ENCODE measurements at regions of chr11 and their contacts with region 1.

Region 1: DNA sequence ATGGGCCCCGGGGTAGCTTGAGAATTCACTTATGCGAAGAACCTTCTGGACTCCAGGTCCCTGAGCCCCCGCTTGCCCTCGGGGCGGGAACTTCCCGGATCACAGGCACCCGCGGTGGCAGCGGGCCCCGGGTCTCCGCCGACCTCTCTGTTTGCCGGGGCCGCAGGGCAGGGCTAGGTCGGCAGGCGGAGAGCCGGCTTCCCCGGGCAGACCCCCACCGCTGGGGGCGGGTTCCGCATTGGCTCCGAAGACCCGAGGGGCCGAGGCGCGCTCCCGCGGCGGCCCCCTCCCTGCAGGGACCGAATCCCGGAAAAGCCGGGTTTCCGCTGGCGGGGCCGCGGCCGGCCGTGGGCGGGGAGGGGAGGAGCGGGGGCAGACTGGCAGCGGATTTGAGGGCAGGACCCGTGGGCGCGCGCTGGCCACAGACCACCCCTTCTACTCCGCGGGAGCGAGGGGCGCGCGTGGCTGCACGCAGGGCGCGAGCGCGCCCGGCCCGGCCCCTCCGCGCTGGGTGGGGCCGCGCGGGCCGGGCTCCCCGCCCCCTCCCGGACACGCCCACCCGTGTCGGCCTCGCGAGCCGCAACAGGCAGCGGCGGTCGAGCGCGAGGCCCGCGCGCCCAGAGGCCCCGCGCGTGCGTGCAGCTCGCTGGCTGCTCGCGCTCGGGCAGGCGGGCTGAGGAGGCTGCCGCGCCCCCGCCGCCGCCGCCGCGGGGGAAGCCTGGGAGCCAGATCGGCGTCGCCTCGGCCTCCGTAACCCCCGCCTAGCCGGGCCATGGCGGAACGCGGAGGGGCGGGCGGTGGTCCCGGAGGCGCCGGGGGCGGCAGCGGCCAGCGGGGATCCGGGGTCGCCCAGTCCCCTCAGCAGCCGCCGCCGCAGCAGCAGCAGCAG is at the start of gene PACS1:
- DNase-seq: peak; percentile 72 to 85 (median 79)
- H3K4me3 ChIP-seq: peak within 1 kb of the TSS; percentile 16 to 75 (median 62)
- H3K27ac ChIP-seq: peak within 1 kb of the TSS; percentile 48 to 98 (median 94)
- H3K4me1 ChIP-seq: peaks cover 18 to 39% of the 10 kb centered on the region in 2 donors
- H3K27me3 ChIP-seq: no peaks in the 10 kb centered on the region
- CTCF ChIP-seq: peak in 2 of 6 experiments; percentile 30 to 64
- POLR2A ChIP-seq: peak; percentile 65 to 70
- total RNA-seq, gene PACS1: 21.1 to 60.5 (median 50.6) TPM

Region 2: DNA sequence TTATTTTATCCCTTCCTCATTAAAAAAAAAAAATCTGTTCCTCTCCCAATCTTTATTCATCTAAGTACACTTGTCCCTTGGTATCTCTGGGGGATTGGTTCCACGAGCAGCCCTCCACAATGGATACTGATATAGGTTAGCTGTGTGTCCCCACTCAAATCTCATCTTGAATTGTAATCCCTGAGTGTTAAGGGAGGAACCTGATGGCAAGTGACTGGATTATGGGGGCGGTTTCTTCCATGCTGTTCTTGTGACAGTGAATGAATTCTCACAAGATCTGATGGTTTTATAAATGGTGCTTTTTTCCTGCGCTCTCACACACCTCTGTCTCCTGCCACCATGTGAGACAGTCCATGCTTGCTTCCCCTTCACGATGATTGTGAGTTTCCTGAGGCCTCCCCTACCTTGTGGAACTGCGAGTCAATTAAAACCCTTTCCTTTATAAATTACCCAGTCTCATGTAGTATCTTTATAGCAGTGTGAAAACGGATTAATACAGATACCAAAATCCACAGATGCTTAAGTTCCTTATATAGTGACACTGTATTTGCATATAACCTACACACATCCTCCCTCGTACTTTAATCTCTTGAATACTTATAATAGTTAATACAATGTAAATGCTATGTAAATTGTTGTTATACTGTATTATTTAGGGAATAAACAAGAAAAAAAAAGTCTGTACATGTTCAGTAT is 62.1 kb after region 1 on chr11:
- intact Hi-C with region 1: loop called in 1 of 2 experiments (anchors 2 kb)
- DNase-seq: no peak
- H3K4me3 ChIP-seq: no peak overlapping the region
- H3K27ac ChIP-seq: no peak overlapping the region
- H3K4me1 ChIP-seq: peaks cover 2 to 4% of the 10 kb centered on the region in 2 donors
- H3K27me3 ChIP-seq: no peaks in the 10 kb centered on the region
- CTCF ChIP-seq: no peak
- POLR2A ChIP-seq: no peak

Region 3: GRCh38 chr11:66641834-66642233 is 571.9 kb after region 1 on chr11:
- intact Hi-C with region 1: loop called in 1 of 2 experiments (anchors 10 kb)
- DNase-seq: no peak
- H3K4me3 ChIP-seq: peak overlapping the region in 1 of 4 donors; percentile 94
- H3K27ac ChIP-seq: no peak overlapping the region
- H3K4me1 ChIP-seq: peaks cover 72 to 83% of the 10 kb centered on the region in 2 donors
- H3K27me3 ChIP-seq: no peaks in the 10 kb centered on the region
- CTCF ChIP-seq: no peak
- POLR2A ChIP-seq: no peak